Heart right ventricle (tissue), 16 donors: ENCODE measurements at regions of chr9 and their contacts with region 1.

Region 1: DNA sequence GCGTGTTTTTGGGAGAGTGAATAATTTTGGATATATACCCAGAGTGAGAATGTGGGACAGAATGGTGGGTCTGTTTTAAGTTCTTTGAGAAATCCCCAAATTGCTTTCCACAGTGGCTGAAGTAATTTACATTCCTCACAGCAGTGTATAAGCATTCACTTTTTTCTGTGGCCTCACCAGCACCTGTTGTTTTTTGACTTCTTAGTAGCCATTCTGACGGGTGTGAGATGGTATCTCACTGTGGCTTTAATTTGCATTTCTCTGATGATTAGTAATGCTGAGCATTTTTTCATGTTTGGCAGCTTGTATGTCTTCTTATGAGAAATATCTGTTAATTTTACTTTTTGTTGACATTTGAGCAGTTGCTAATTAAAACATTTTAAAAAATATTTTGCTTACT is 9.4 kb upstream of the SPATA31D1 start:
- DNase-seq: no peak
- ATAC-seq: no peak
- H3K4me3 ChIP-seq: no peak overlapping the region
- H3K27ac ChIP-seq: no peak overlapping the region
- H3K4me1 ChIP-seq: no peaks in the 10 kb centered on the region
- H3K27me3 ChIP-seq: no peaks in the 10 kb centered on the region
- CTCF ChIP-seq: no peak

Region 2: DNA sequence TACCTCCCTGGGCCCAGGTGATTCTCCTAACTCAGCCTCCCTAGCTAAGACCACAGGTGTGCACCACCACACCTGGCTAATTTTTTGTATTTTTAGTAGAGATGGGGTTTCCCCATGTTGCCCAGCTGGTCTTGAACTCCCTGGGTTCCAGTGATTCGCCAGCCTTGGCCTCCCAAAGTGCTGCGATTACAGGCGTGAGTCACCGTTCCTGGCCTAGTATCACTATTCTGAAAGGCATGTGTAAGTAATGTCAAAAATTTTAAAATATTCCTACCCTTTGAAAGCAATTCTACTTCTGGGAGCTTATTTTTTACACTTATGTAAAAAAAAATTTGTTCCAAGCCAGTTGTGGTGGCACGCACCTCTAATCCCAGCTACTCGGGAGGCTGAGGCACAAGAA is 262.8 kb before region 1 on chr9:
- intact Hi-C with region 1: no loop called
- DNase-seq: no peak
- ATAC-seq: no peak
- H3K4me3 ChIP-seq: no peak overlapping the region
- H3K27ac ChIP-seq: no peak overlapping the region
- H3K4me1 ChIP-seq: no peaks in the 10 kb centered on the region
- H3K27me3 ChIP-seq: peaks cover 0 to 14% (median 0%) of the 10 kb centered on the region in 7 donors
- CTCF ChIP-seq: no peak

Region 3: DNA sequence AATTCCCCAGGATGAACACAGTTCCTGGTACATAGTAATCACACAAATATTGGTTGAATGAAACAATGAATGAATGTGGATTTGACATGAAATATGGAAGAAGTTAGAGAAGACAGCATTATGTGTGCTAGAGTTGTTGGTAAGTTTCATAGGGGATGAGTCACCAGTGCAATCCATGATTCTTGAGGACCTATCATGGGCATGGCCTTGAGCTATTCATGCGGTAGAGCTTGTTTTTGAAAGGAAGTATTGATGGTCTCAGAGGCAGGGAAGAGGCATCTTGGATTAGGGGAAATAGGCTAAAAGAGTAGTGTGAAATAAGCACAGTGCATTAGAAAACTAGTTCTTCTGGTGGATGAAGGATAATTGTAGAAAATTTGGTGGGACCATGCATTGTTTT is 31.5 kb after region 1 on chr9:
- intact Hi-C with region 1: loop called in 1 of 10 experiments (anchors 1 kb)
- DNase-seq: no peak
- ATAC-seq: no peak
- H3K4me3 ChIP-seq: no peak overlapping the region
- H3K27ac ChIP-seq: no peak overlapping the region
- H3K4me1 ChIP-seq: no peaks in the 10 kb centered on the region
- H3K27me3 ChIP-seq: no peaks in the 10 kb centered on the region
- CTCF ChIP-seq: no peak